BJ (cell line): ENCODE measurements at regions of chr9 and their contacts with region 1.

Region 1: GRCh38 chr9:134681061-134681661 is 39.6 kb downstream of the COL5A1 start:
- DNase-seq: no peak
- H3K4me3 ChIP-seq: no peak overlapping the region
- H3K27me3 ChIP-seq: no peaks in the 10 kb centered on the region
- CTCF ChIP-seq: no peak

Region 2: DNA sequence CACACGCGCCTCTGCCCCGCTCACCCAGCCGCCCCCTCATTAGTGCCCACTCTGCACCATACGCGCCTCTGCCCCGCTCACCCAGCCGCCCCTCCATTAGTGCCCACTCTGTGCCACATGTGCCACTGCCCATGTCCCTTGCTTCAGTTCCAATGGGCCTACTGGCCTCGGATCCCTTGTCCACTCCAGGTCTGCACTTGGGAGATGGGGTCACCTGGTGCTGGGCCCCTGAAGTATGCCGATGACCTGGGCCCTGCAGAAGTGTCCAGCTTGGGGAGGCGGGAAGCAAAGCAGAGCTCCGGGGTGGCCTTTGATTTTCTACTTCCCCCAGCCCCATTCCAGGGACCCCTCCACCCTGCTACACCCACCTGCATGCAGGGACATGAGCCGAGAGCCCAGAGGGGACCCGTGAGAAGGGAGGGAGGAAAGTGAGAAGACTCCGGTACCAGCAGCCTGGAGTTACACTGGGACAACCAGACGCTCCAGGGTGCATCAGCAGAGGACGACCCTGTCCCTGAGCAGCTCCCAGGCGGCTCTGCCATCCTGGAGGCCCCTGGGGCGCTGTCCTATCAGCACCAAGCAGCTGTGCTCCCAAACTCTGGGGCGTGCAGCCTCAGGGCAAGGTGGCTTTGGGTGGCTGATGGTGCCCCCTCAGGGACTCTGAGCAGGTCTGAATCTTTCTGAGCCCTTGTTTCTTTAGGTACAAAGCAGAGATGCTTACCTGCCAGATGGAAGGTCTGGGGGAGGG is 214.1 kb before region 1 on chr9:
- CTCF ChIA-PET with region 1: no interaction called
- POLR2A ChIA-PET with region 1: no interaction called
- DNase-seq: no peak
- H3K4me3 ChIP-seq: no peak overlapping the region
- H3K27me3 ChIP-seq: no peaks in the 10 kb centered on the region
- CTCF ChIP-seq: no peak

Region 3: DNA sequence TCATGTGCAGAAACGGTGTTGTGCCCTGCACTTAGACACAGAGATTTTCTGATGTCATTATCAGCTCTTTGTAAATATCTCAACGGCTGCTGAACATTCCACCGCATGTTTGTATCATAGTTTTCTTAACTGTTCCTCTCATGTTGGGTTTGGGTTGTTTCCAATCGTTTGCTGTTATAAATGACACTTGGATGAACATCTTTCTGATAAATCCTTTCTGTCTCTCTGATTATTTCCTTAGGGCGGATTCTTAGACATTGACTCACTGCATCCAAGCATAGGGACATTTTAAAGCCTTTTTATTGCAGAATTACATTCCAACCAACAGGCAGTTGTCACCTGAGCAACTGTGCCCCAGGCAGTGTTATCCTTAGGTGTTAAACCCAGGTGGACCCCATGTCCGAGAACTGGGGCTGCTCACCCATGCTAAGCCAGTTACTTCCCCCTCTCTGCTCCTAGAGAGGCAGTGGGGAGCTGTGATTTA is 11.1 kb before region 1 on chr9:
- CTCF ChIA-PET with region 1: interaction called, 11 read pairs
- POLR2A ChIA-PET with region 1: no interaction called
- DNase-seq: peak; percentile 87
- H3K4me3 ChIP-seq: no peak overlapping the region
- H3K27me3 ChIP-seq: no peaks in the 10 kb centered on the region
- CTCF ChIP-seq: no peak